MCF 10A (cell line): ENCODE measurements at regions of chr11 and their contacts with region 1.

Region 1: DNA sequence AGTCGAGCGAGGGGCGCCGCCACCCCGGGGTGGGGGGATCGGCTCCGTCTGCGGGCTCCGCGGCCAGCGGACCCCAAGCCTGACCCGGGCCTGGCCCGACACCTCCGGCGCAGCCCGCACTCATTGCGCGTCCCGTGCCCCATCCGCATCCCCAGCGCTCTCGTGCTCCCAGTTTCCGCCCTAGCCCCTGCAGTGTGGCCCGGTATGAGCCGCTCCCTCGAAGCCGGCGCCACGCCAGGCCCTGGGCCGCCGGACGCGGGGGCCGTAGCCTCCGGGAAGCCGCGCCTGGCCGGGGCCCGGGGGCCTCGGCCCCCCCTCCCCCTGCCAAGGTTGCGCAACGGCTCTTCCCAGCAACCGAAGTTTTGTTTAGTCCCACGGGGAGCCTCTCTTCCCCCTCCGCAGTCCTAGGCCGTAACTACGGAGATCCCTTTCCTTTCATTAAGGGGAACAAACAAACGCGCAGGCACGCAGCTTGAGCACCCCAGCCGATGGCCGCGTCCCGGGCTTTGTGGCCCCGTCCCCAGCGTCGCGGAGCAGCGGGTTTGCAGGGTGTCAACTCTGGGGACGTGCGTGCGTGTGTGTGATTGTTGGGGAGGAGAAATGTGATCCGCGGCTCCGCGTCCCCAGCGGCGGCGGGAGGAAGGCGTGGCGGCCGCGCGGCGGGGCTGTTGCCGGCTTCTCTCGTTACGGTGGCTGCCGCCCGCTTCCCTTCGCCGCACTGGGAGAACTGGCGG is 883 bp downstream of the HIPK3 start:
- DNase-seq: peak; percentile 92
- H3K4me3 Mint-ChIP-seq: peak overlapping the region; percentile 90
- H3K27ac Mint-ChIP-seq: peak overlapping the region; percentile 95
- H3K4me1 Mint-ChIP-seq: peaks cover 28% of the 10 kb centered on the region
- H3K27me3 Mint-ChIP-seq: no peaks in the 10 kb centered on the region
- CTCF ChIP-seq: no peak

Region 2: DNA sequence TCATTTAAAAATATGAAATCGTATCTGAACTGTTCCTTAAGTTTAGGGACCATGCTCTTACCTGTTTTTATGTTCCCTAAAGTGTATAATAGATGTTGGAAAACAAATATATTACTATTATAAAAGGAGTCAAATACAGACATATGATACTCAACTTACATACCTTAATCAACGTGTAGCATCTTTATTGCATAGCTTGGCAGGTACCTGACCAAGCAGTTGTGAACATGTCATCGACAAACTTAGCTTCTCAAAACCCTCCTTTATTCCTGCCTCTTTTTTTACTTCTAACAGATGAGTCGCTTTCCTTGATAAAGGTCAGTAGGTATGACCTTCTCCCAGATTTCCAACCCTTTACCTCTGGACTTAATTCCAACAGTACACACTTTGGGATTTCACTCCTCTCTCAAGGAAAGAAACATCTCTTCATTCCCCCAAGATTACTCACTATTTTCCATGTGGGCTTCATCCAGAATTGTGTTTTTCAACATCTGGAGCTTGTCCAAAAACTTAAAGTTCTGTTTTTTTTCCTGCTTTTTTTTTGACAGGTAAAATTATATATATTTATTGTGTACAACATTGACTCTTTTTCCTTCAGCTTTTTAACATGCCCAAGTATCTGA is 11.0 kb after region 1 on chr11:
- CTCF ChIA-PET with region 1: interaction called, 3 read pairs
- POLR2A ChIA-PET with region 1: interaction called, 52 read pairs
- intact Hi-C with region 1: no loop called
- DNase-seq: no peak
- H3K4me3 Mint-ChIP-seq: no peak overlapping the region
- H3K27ac Mint-ChIP-seq: peak overlapping the region; percentile 8
- H3K4me1 Mint-ChIP-seq: peaks cover 17% of the 10 kb centered on the region
- H3K27me3 Mint-ChIP-seq: no peaks in the 10 kb centered on the region
- CTCF ChIP-seq: no peak

Region 3: GRCh38 chr11:33329705-33330329 is 71.8 kb after region 1 on chr11:
- CTCF ChIA-PET with region 1: interaction called, 5 read pairs
- POLR2A ChIA-PET with region 1: interaction called, 5 read pairs
- intact Hi-C with region 1: loop called (anchors 1 kb)
- DNase-seq: peak; percentile 68
- H3K4me3 Mint-ChIP-seq: no peak overlapping the region
- H3K27ac Mint-ChIP-seq: peak overlapping the region; percentile 49
- H3K4me1 Mint-ChIP-seq: peaks cover 20% of the 10 kb centered on the region
- H3K27me3 Mint-ChIP-seq: no peaks in the 10 kb centered on the region
- CTCF ChIP-seq: peak; percentile 59

Region 4: GRCh38 chr11:33362051-33362910 is 104.2 kb after region 1 on chr11:
- CTCF ChIA-PET with region 1: no interaction called
- POLR2A ChIA-PET with region 1: no interaction called
- intact Hi-C with region 1: no loop called
- DNase-seq: peak; percentile 50
- H3K4me3 Mint-ChIP-seq: no peak overlapping the region
- H3K27ac Mint-ChIP-seq: no peak overlapping the region
- H3K4me1 Mint-ChIP-seq: no peaks in the 10 kb centered on the region
- H3K27me3 Mint-ChIP-seq: no peaks in the 10 kb centered on the region
- CTCF ChIP-seq: peak; percentile 50

Region 5: DNA sequence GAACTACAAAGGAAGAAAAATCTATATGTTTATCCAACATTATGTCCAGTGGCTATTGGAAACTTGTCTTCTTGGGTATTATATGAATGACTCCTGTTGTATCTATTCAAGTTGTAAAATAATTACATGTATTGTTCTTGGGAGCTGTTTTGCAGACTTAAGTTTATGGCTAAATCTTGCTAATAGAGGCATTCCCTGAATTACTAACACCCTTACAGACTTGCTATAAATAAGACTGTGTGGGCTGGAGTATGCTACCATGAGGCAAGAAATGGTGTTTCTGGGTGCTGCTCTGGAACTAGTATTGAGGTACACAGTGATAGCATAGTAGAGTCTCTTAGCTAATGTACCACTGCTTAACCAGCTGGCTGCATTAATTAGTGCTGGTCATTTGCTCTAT is 154.2 kb after region 1 on chr11:
- CTCF ChIA-PET with region 1: no interaction called
- POLR2A ChIA-PET with region 1: no interaction called
- intact Hi-C with region 1: no loop called
- DNase-seq: no peak
- H3K4me3 Mint-ChIP-seq: no peak overlapping the region
- H3K27ac Mint-ChIP-seq: no peak overlapping the region
- H3K4me1 Mint-ChIP-seq: no peaks in the 10 kb centered on the region
- H3K27me3 Mint-ChIP-seq: peaks cover 44% of the 10 kb centered on the region
- CTCF ChIP-seq: no peak